B cell (primary cell): ENCODE measurements at regions of chr19 and their contacts with region 1.

Region 1: GRCh38 chr19:53394974-53395839 is at the start of gene ZNF765:
- DNase-seq: peak; percentile 96
- ATAC-seq: peak; percentile 100
- H3K4me3 ChIP-seq: peak within 1 kb of the TSS; percentile 65 to 85 (median 78)
- H3K4me3 Mint-ChIP-seq: peak within 1 kb of the TSS; percentile 86
- H3K27ac ChIP-seq: peak within 1 kb of the TSS; percentile 34 to 85
- H3K27ac Mint-ChIP-seq: peak within 1 kb of the TSS; percentile 69
- H3K4me1 ChIP-seq: peaks cover 11 to 16% of the 10 kb centered on the region in 2 donors
- H3K4me1 Mint-ChIP-seq: peaks cover 30% of the 10 kb centered on the region
- H3K27me3 ChIP-seq: no peaks in the 10 kb centered on the region
- H3K27me3 Mint-ChIP-seq: no peaks in the 10 kb centered on the region
- CTCF ChIP-seq: peak; percentile 64
- total RNA-seq, gene ZNF765: 24.0 and 26.6 TPM in 2 replicates

Region 2: GRCh38 chr19:53333463-53334449 is 61.5 kb before region 1 on chr19 and contains the start of gene ZNF845:
- CTCF ChIA-PET with region 1: no interaction called
- POLR2A ChIA-PET with region 1: no interaction called
- intact Hi-C with region 1: loop called (anchors 1 kb)
- DNase-seq: peak; percentile 95
- ATAC-seq: peak; percentile 100
- H3K4me3 ChIP-seq: peak within 1 kb of the TSS; percentile 94 to 99 (median 96)
- H3K4me3 Mint-ChIP-seq: peak within 1 kb of the TSS; percentile 96
- H3K27ac ChIP-seq: peak within 1 kb of the TSS; percentile 60 to 81
- H3K27ac Mint-ChIP-seq: peak within 1 kb of the TSS; percentile 95
- H3K4me1 ChIP-seq: peaks cover 10 to 21% of the 10 kb centered on the region in 2 donors
- H3K4me1 Mint-ChIP-seq: peaks cover 22% of the 10 kb centered on the region
- H3K27me3 ChIP-seq: peaks cover 0 to 3% (median 0%) of the 10 kb centered on the region in 4 experiments
- H3K27me3 Mint-ChIP-seq: peaks cover 11% of the 10 kb centered on the region
- CTCF ChIP-seq: no peak
- total RNA-seq, gene ZNF845: 16.9 and 17.4 TPM in 2 replicates

Region 3: DNA sequence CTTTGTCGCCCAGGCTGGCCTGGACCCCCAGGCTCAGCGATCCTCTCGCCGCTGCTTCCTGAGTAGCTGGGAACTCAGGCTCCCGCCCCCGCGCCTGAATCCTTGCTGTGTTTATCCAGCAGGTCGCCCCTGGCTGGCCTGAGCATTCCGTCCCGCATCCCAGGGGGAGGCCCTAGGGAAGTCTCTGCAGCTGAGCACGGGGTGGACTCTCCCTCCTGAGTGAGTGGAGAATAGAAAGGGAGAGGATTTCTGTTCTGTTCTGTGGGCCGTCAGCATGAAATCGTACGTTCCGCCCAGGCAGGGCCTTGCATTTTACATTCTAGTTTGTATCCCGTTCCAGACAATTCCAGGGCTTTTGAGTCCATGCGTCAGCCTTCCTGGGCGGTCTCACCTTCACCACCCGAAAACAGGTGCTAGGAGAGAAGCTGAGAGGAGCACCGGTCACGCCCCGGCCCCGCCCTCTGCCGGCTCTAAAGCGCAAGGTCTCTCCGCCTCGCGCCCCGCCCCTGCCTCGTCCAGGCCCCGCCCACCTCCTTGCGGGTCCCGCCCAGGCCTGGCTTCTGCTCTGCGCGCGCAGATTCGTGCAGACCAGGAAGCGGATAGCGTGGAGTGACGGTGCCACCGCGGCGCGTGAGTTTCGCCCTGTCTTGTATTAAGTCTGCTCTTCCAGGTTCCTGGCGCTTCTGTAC is 36.3 kb after region 1 on chr19 and contains the start of gene ZNF761:
- CTCF ChIA-PET with region 1: interaction called, 3 read pairs
- POLR2A ChIA-PET with region 1: interaction called, 4 read pairs
- intact Hi-C with region 1: loop called (anchors 1 kb)
- DNase-seq: peak; percentile 97
- ATAC-seq: peak; percentile 98
- H3K4me3 ChIP-seq: peak within 1 kb of the TSS; percentile 60 to 83 (median 79)
- H3K4me3 Mint-ChIP-seq: peak within 1 kb of the TSS; percentile 95
- H3K27ac ChIP-seq: peak within 1 kb of the TSS; percentile 61 to 82
- H3K27ac Mint-ChIP-seq: peak within 1 kb of the TSS; percentile 89
- H3K4me1 ChIP-seq: peaks cover 10 to 13% of the 10 kb centered on the region in 2 donors
- H3K4me1 Mint-ChIP-seq: peaks cover 34% of the 10 kb centered on the region
- H3K27me3 ChIP-seq: no peaks in the 10 kb centered on the region
- H3K27me3 Mint-ChIP-seq: no peaks in the 10 kb centered on the region
- CTCF ChIP-seq: peak; percentile 39
- total RNA-seq, gene ZNF761: 14.9 and 18.9 TPM in 2 replicates

Region 4: DNA sequence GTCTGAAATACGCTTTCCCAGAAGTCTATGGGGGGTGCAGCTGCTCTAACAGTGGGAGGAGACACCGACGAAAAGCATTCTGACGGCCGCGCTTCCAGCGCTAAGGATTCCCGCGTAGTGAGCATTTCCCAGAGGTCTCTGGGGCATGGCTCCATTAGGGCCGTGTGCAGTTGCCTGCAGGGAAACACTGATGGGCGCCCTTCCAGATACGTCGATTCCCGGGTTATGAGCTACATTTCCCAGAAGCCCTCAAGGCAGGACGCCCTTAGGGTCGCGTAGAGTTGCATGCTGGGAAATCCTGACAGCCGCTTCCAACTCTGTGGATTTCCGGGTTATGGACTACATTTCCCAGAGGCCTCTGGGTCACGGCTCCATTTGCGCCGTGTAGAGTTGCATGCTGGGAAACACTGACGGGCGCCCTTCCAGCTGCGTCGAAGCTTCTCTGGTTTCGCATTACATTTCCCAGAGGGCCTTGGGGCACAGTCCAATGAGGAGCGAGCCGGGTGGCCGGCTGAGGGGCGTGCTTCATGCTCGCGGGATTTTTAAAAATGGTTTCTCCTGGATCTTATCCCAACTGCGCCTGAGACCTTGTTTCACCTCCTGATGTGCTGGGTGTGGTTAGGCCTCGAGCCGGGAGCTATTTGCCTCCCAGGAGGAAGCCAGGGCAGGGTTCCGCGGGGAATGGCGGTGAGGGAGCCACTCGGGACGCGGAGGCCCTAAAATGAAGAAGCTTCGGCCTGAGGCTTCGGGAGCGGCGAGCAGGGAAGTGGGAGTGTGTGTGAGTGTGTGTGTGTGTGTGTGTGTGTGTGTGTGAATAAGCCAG is 125.6 kb after region 1 on chr19:
- CTCF ChIA-PET with region 1: no interaction called
- POLR2A ChIA-PET with region 1: no interaction called
- intact Hi-C with region 1: loop called (anchors 2 kb)
- DNase-seq: peak; percentile 96
- ATAC-seq: peak; percentile 97
- H3K4me3 ChIP-seq: peak overlapping the region; percentile 59 to 96 (median 81)
- H3K4me3 Mint-ChIP-seq: peak overlapping the region; percentile 96
- H3K27ac ChIP-seq: peak overlapping the region; percentile 66 to 89
- H3K27ac Mint-ChIP-seq: peak overlapping the region; percentile 95
- H3K4me1 ChIP-seq: peaks cover 7 to 15% of the 10 kb centered on the region in 2 donors
- H3K4me1 Mint-ChIP-seq: peaks cover 16% of the 10 kb centered on the region
- H3K27me3 ChIP-seq: no peaks in the 10 kb centered on the region
- H3K27me3 Mint-ChIP-seq: no peaks in the 10 kb centered on the region
- CTCF ChIP-seq: no peak